H1 (cell line): ENCODE measurements at regions of chr22 and their contacts with region 1.

Region 1: GRCh38 chr22:44026630-44027511 is 2.8 kb downstream of the PARVB start:
- DNase-seq: no peak
- H3K4me3 ChIP-seq: no peak overlapping the region
- H3K27ac ChIP-seq: no peak overlapping the region
- H3K4me1 ChIP-seq: peaks cover 0 to 14% (median 2%) of the 10 kb centered on the region in 4 experiments; a peak in 4 of 7 replicates
- H3K27me3 ChIP-seq: peaks cover 0 to 8% (median 3%) of the 10 kb centered on the region in 4 experiments; a peak in 4 of 7 replicates
- CTCF ChIP-seq: no peak
- EP300 ChIP-seq: no peak
- POLR2A ChIP-seq: no peak
- RAD21 ChIP-seq: no peak

Region 2: DNA sequence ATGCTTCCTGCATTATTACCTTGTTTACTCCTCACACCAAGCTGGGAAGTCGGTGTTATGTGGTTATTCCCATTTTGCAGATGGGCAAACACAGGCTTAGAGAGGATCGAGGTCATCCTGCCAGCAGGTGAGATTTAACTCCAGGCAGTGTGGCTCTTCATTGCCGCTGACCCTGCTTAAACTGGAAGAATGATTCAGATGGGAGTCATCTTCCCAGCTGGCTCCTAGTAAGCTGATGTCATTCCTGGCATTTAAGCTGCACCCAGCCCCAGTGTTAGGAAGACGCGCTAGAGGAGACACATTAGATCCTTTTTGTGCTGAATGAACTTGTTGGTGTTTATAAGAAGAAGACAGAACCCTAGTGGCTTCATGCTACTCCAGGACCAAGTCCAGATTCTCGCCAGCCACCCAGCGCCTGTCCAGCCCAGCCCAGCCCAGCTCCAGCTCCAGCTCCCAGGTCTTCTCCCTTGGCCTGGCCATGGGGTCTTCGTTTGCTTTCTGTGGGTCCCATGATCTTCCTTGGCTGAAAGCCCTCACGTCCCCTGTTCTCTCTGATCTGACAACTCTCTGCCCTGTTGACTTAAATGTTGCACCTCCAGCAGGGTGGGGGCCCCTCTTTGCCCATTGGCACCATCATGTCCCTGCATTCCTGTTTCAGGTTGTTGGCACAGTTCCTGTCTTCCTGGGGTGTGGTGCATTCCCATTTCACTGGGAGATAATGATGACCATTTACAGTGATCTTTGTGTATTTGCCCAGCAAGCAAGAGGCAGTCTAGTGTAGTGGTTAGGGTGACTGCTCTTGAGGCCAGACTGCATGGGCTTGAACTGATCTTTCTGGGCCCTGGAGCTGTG is 10.9 kb after region 1 on chr22:
- CTCF ChIA-PET with region 1: interaction called, 13 read pairs
- POLR2A ChIA-PET with region 1: no interaction called
- DNase-seq: no peak
- H3K4me3 ChIP-seq: no peak overlapping the region
- H3K27ac ChIP-seq: no peak overlapping the region
- H3K4me1 ChIP-seq: no peaks in the 10 kb centered on the region
- H3K27me3 ChIP-seq: no peaks in the 10 kb centered on the region
- CTCF ChIP-seq: no peak
- EP300 ChIP-seq: no peak
- POLR2A ChIP-seq: no peak
- RAD21 ChIP-seq: no peak

Region 3: DNA sequence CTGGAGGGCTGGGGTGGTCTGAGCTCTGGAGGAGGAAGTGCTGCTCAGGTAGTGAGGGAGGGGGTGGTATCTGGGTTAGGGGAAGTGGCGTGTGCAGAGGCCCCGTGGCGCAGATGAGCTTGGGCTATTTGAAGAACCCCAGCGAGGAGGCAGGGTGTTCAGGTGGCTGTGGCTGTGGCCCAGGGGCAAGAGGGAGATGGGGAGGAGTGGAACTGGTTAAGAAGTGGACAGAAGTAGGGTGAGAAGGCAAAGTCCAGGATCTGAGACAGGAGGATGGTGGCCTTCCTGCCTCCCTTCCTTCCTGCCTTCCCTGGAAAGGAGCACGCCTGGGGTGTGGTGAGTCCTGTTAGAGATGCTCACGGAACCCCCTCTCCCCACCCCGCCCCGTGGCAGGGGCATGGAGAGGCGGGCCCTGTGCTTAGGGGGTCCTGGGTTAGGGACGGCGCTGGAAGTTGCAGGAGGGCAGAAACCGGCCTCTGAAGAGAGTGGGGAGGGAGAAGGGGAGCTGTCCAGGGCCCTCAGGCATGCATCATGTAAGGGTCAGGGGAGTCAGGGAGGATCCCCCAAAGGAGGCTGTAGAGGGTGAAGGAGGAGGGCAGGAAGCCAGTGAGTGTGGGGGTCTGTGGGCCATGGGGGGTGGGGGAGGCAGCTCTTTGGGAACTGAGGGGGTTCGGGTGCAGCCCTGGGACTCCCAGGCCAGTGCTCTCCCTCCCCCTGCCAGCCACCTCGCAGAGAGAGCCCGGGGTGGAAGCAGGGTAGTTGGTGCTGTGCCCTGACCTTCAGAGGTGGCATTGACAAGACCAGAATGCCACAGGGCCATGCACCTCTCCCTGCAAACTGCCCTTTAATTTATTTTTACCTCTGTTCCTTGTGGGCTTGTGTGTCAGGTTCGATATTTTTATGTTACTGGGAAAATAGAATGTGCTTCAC is 90.1 kb after region 1 on chr22:
- CTCF ChIA-PET with region 1: no interaction called
- POLR2A ChIA-PET with region 1: no interaction called
- DNase-seq: no peak
- H3K4me3 ChIP-seq: no peak overlapping the region
- H3K27ac ChIP-seq: no peak overlapping the region
- H3K4me1 ChIP-seq: 0 out of 7 replicates have a peak, but pooled peaks cover 0 to 3% (median under 1%) of the 10 kb centered on the region in 4 experiments
- H3K27me3 ChIP-seq: no peaks in the 10 kb centered on the region; a peak in 1 of 7 replicates
- CTCF ChIP-seq: no peak
- EP300 ChIP-seq: no peak
- POLR2A ChIP-seq: no peak
- RAD21 ChIP-seq: no peak